GM13977 (cell line): ENCODE measurements at regions of chr5 and their contacts with region 1.

Region 1: DNA sequence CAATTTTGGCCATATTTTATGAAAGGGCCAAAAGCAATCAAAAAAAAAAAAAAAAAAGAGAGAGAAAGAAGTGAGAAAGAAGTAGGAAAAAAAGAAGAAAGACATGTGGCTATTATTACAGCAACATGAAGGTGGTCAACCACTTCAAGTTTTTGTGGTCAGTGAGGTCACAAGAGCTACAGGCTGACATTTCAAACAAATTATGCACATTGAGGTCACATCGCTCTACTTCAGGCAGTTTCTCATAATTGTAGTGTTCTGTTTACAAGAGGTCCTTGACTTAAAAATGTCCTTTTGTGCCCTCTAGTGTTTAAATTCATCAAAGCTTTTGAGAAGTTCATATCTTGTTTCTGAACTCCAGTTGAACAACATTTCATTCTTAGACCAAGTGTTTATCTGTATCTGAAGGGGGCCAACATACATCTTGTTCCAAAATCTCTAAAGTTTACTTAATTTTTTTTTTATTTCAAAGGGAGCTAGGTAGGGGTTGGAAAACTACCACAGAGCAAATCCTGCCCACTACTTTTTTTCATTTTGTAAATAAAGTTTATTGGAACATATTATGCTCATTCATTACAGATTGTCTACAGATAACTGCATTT is 513.1 kb downstream of the PDE4D start:
- DNase-seq: peak; percentile 45
- CTCF ChIP-seq: peak; percentile 56

Region 2: DNA sequence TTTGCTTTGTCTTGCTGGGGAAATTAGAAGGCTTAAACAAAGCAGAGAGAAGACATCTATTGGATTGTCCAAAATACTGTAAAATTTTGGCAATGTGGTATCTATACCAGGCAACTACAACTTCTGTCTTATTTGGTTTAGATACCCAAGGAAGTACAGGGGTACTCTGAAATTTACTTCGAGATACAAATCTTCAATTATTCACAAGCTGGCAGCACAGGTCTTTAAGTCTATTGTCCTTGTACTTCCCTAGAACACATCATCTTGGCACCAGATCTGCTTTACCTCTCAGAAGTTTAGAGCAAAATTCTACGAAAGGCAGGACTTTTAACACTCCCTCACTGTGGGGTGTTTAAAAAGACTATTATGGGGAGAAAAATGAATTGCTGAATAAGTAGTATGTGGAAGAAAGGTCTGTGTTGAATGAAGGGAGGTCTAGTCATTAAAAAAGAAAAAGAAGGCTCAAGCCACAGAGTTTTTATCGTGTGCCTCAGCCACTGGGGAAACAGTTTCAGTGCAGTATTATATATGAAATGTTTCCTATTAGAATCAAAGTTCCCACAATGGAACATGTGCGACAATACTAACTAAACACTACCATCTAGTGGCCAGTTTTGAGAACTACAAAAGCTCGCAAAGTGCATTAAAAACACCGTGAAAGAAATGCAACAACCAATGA is 419.4 kb after region 1 on chr5:
- in situ Hi-C with region 1: loop called (anchors 25 kb)
- DNase-seq: no peak
- CTCF ChIP-seq: peak; percentile 54